Calu3 (cell line): ENCODE measurements at regions of chr3 and their contacts with region 1.

Region 1: DNA sequence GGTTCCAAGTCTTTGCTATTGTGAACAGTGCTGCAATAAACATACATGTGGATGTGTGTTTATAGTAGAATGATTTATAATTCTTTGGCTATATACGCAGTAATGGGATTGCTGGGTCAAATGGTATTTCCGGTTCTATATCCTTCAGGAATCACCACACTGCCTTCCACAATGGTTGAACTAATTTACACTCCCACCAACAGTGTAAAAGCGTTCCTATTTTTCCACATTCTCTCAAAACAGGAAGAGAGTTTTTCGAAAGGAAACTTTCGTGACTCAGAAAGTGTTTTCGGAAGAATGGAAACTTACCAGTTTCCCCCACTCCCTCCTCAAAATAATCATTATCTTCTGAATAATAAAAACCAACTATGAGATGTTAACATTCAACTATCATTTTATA is 205.8 kb downstream of the ALCAM start:
- DNase-seq: no peak
- H3K4me3 Mint-ChIP-seq: no peak overlapping the region
- H3K27ac Mint-ChIP-seq: no peak overlapping the region
- H3K4me1 Mint-ChIP-seq: peaks cover 2% of the 10 kb centered on the region
- H3K27me3 Mint-ChIP-seq: no peaks in the 10 kb centered on the region
- CTCF ChIP-seq: no peak

Region 2: DNA sequence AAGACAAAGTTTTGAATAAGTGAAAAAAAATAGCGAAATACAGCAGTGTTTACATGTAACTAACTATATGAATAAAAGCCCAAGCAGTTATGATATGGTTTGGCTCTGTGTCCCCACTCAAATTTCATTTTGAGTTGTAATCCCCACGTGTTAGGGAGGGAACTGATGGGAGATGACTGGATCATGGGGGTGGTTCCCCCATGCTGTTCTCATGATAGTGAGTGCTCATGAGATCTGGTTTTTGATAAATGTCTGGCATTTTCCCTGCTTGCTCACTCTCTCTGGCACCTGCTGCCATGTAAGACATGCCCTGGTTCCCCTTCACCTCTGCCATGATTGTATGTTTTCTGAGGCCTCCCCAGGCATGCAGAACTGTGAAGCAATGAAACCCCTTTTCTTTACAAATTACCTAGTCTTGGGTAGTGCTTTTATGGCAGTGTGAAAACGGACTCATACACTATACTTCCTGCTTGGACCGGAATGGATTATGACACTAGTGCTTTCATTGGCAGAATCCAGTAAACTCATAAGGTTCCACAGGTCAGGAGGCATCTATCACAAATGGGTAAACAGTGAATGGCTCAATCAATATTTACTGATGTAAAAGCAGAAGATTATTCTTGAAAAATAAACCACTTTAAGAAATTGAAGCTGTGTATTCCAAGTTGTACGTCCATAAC is 104.3 kb after region 1 on chr3:
- CTCF ChIA-PET with region 1: no interaction called
- intact Hi-C with region 1: no loop called
- DNase-seq: no peak
- H3K4me3 Mint-ChIP-seq: no peak overlapping the region
- H3K27ac Mint-ChIP-seq: no peak overlapping the region
- H3K4me1 Mint-ChIP-seq: no peaks in the 10 kb centered on the region
- H3K27me3 Mint-ChIP-seq: no peaks in the 10 kb centered on the region
- CTCF ChIP-seq: no peak

Region 3: GRCh38 chr3:106466881-106467280 is 894.4 kb after region 1 on chr3:
- CTCF ChIA-PET with region 1: interaction called, 10 read pairs
- intact Hi-C with region 1: no loop called
- DNase-seq: no peak
- H3K4me3 Mint-ChIP-seq: no peak overlapping the region
- H3K27ac Mint-ChIP-seq: no peak overlapping the region
- H3K4me1 Mint-ChIP-seq: no peaks in the 10 kb centered on the region
- H3K27me3 Mint-ChIP-seq: no peaks in the 10 kb centered on the region
- CTCF ChIP-seq: no peak